ENCODE measurements at regions of chr10 and their contacts with region 1.

Region 1: DNA sequence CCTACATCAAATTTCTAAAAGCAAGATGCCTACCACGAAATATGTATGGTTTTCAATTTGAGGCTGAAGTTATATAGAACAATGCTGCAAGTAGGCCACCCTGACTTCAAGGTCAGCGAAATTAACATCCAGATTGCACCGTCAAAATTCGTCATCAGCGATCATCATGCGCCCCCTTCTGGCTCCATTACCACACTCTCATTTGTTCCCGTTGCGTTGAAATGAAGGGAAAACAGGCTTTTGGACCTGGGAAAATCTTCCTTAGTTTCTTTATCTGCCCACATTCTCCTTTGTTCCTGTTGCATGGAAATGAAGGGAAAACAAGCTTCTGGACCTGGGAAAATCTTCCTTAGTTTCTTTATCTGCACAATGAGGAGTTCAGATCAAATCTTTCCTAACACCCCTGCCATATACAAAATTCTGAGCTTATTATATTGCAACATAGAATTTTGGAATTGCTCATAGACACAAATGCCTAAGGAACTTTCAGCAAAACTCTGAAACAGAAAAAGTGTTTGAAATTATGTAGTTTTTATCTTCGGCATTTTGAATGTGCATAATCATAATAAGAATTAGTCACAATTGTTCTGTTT is 98.2 kb upstream of the PRKCQ start:
- DNase-seq: peak; percentile 42
- ATAC-seq: peak; percentile 56

Region 2: DNA sequence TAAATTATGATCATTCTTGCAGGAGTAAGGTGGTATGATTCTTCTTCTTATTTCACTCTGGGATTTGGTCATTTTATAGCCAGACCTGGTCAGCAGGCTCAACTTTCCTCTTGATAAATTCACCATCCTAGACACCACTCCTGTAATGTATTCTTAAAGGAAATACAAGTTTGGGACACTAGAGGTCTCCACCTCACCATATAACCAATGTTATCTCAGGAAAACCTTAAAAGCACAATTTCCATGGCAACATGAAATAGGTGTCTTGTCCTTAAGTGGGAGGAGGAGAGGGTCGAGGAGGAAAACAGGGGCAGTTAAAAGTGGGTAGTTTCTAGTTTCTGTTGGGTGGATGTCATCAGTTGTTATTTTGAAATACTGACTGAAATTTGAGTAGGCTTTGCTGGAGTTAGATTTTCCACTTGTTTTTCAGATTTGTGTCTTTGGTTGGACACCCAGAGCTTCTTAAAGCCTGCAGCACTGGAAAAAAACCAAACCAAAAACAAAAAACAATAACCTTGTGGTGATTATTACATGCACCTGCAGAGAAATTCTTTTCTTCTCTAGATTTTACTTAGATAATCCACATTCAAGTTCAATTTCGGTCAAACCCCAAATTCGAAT is 261.3 kb before region 1 on chr10:
- intact Hi-C with region 1: loop called (anchors 5 kb)
- DNase-seq: no peak
- ATAC-seq: peak; percentile 59

Region 3: DNA sequence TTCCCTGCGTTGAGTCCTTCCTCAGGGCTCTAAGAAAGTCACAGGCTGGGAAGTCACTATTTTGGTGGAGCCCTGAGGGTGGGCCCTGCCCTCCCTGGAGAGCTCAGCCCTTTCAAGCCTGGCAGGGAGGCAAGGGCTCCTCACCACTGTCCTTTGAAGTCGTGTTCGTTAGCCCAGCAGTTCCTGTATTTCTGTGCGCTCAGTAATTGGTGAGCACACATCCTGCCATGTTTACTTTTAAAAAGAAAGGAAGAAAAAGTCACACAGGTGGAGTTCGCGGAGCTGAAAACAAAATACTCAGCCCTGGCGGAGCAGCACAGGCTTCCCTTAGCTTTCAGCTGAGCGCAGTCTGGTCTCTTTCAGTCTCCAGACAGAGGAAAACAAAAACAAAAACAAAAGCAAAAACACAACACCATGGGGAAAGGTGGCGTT is 135.3 kb before region 1 on chr10:
- intact Hi-C with region 1: no loop called
- DNase-seq: no peak
- ATAC-seq: no peak

Region 4: DNA sequence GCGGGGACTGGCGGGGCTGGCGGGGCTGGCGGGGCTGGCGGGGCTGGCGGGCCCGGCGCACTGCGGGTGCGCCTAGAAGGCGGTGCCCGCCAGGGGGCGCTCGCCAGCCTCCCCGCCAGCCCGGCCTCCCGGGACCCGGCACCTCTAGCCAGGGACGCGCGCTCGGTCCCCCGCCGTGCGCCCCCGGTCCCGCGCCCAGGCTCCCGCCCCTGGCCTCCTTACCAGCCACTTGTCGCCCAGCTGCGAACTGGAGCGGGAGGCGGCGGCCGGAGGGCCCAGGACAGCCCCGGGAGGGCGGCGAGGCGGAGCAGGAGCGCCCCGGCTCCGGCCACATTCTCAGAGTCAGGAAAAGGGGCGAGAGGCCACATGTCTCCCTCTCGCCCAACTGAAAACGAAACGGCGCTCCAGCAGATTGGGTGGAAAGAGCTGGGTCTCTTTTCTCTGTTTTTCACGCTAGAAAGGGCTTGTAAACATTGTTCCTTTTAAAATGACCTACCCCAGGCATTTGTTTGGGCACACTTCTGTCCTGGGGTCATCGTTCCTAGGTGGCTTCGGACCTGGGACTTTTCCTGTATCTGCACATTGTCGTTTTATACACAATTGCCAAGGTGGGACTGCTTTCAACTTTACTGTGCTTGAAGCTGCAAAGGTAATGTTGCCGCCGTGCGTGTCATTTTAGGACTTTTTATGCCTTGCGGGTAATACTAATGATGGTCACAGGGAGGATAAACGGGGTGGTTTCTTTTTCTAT is 97.9 kb before region 1 on chr10:
- intact Hi-C with region 1: loop called (anchors 5 kb)
- DNase-seq: peak; percentile 81
- ATAC-seq: peak; percentile 96

Region 5: DNA sequence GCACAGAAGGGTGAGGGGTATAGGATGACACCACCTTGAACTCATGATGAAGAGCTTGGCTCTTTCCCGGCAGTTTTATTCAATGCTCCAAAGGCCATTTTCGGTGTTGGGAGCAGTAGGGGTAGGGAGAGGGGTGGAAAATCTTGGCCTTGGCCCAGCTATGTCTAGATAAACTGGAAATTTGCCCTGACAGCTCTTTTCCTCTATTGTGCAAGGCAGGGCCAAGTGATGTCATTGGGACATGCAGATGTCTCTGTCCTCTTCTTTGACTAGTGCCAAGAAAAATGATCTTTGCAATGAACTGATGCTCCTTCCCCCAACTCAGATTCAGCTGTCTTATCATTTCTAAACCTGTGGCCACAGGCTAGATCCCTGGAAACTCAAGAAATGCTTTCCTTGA is 70.5 kb before region 1 on chr10:
- intact Hi-C with region 1: no loop called
- DNase-seq: no peak
- ATAC-seq: peak; percentile 71

Region 6: DNA sequence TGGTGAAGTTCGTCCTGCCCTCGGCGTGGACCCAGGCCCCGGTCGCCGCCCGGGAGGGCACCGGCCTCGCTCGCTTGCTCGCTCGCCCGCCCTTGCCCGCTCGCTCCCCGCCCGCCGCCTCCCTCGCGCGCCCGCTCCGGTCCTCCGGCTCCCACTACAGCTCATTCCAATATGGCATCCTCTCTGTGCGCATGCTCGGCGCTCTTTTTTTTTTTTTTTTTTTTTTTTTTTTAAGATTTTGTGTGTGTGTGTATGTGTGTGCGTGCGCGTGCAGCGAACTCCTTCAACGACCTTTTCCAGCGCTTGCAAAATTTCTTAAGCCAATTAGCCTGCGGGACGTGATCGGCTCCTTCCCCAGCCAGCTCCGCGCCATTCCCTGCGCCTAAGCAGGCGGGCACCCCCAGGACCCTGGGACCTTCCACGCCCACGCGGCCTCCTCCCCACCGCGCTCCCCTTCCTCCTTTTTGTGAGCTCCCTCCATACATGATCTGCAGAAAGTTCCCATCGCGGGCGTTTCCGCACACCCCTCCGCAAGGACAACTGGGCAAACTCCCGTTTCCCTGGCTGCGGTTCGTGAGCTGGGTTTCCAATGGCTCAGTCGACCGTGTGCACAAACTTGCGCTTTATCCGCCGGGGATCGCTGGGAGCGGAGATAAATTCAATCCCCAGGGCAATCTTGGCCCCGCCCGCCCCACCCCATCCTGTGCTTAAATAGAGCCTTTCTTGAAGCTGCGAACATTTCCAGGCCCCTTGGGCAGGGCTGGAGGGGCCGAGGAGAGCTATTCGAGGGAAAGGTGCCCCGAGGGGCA is 732.8 kb after region 1 on chr10 and contains the start of gene SFMBT2:
- intact Hi-C with region 1: loop called (anchors 10 kb)
- DNase-seq: peak; percentile 81
- ATAC-seq: peak; percentile 76
- total RNA-seq, gene SFMBT2: 11.0 TPM